ENCODE measurements at regions of chr11 and their contacts with region 1.

Region 1: DNA sequence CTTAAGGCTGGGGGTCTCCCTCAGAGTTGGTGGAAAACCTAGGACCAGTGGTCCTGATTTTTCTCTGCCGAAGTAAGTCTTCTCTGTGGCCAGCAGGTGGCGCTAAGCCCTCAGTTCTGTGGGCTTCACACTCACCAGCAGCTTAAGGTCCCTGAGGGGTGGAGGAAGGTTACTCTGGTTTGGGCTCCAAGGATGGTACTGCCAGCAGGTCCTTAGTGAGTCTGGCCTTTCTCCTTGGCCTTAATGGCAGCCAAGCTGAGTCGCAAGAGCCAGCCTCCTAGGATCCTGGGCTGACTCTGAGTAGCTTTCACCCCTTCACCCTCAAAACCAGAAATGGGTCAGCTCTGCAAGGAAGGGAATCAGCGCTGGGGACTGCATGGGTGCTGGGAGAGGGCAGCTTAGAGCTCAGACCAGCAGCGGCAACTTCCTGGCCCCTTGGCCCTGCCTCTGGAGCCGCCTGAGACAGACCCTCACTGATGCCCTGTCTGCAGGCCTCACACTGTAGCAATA is 4.4 kb downstream of the KCNJ11 start:
- DNase-seq: peak; percentile 75
- ATAC-seq: peak; percentile 66
- H3K4me3 ChIP-seq: no peak overlapping the region
- H3K27ac ChIP-seq: no peak overlapping the region
- H3K4me1 ChIP-seq: no peaks in the 10 kb centered on the region
- H3K27me3 ChIP-seq: no peaks in the 10 kb centered on the region
- CTCF ChIP-seq: peak; percentile 90

Region 2: DNA sequence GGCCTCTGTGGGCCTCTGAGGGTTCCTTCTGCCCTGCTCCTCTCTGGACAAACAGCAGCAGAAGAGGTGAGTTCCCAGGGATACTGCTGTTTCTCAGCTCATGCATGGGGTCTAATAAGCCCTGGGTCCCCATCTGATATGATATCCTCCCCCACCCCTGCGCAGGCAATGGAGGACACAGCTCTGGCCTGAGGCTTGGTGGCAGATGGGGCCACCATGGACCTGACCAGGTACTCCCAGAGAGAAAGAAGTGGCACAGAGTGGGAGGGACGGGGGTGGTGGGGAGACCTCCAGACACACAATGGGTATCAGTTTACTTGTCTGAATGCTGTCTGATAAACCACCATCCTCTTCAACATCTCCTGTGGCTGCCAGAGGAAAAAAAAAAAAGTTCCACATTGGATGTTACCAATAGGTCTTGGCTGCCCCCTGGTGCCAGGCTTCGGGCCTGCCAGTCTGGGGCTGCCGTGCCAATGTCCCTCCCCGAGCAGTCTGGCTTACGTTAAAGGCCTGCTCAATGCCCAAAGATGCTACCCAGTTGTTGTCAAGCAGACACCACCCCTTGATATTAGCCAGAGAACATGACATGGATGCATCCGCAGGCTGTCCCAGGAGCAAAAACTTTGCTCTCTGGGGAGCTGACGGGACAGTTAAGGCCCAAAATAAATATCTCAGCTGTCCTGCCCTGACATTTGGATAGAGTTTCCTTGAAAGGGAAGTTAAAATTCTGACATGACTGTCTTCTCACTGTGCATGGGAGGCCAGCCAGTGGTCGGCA is 120.5 kb after region 1 on chr11:
- CTCF ChIA-PET with region 1: interaction called, 4 read pairs
- POLR2A ChIA-PET with region 1: no interaction called
- intact Hi-C with region 1: loop called (anchors 1 kb)
- DNase-seq: peak; percentile 74
- ATAC-seq: peak; percentile 88
- H3K4me3 ChIP-seq: no peak overlapping the region
- H3K27ac ChIP-seq: no peak overlapping the region
- H3K4me1 ChIP-seq: no peaks in the 10 kb centered on the region
- H3K27me3 ChIP-seq: peaks cover 10% of the 10 kb centered on the region; the same call in 1 of the 2 replicates
- CTCF ChIP-seq: peak; percentile 84

Region 3: GRCh38 chr11:17528181-17528691 is 144.2 kb after region 1 on chr11:
- CTCF ChIA-PET with region 1: interaction called, 13 read pairs
- POLR2A ChIA-PET with region 1: no interaction called
- intact Hi-C with region 1: loop called (anchors 1 kb)
- DNase-seq: peak; percentile 65
- ATAC-seq: peak; percentile 96
- H3K4me3 ChIP-seq: no peak overlapping the region
- H3K27ac ChIP-seq: no peak overlapping the region
- H3K4me1 ChIP-seq: no peaks in the 10 kb centered on the region
- H3K27me3 ChIP-seq: peaks cover 34% of the 10 kb centered on the region
- CTCF ChIP-seq: peak; percentile 85

Region 4: GRCh38 chr11:18135308-18135707 is 751.3 kb after region 1 on chr11:
- CTCF ChIA-PET with region 1: no interaction called
- POLR2A ChIA-PET with region 1: no interaction called
- intact Hi-C with region 1: no loop called
- DNase-seq: no peak
- ATAC-seq: no peak
- H3K4me3 ChIP-seq: no peak overlapping the region
- H3K27ac ChIP-seq: no peak overlapping the region
- H3K4me1 ChIP-seq: no peaks in the 10 kb centered on the region
- H3K27me3 ChIP-seq: peaks cover 52% of the 10 kb centered on the region
- CTCF ChIP-seq: no peak